Right ventricle myocardium superior (tissue), 1 donor: ENCODE measurements at regions of chr1 and their contacts with region 1.

Region 1: DNA sequence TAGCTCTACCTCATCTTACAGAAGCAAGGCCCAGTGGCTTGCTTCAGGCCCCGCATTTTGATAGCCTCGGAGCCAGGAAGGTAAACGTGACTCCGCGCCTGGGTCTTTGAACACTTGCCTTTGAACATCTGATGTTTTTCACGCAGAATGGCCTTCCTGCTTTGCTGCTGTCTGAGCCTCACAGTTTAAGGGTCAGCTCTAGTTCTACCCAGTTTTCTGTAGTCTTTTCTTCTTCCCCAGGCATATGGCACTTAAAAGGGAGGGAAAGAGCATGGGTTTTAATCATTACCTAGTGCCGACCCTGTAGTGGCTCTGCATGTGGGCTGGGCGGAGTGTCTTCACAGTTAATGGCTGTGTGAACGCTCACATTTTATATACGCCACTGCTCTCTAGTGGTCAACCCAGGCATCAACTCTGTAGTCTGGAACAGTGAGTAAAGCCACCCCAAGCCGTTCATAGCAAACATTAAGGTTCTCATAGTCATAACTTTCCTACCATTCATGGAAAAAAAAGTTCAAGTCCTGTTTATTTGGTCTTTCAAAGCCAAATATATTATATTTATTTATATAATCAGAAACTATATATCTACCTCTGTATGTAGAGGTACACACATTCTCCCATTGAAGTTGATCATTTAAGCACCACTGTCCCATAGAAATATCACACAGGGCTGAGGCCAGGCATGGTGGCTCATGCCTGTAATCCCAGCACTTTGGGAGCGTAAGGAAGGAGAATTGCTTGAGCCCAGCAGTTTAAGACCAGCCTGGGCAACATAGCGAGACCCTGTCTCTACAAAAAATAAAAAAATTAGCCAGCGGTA is 78.1 kb downstream of the IER5 start:
- DNase-seq: no peak
- ATAC-seq: peak; percentile 98

Region 2: GRCh38 chr1:180527101-180527669 is 639.4 kb before region 1 on chr1:
- intact Hi-C with region 1: loop called (anchors 10 kb)
- DNase-seq: no peak
- ATAC-seq: no peak

Region 3: DNA sequence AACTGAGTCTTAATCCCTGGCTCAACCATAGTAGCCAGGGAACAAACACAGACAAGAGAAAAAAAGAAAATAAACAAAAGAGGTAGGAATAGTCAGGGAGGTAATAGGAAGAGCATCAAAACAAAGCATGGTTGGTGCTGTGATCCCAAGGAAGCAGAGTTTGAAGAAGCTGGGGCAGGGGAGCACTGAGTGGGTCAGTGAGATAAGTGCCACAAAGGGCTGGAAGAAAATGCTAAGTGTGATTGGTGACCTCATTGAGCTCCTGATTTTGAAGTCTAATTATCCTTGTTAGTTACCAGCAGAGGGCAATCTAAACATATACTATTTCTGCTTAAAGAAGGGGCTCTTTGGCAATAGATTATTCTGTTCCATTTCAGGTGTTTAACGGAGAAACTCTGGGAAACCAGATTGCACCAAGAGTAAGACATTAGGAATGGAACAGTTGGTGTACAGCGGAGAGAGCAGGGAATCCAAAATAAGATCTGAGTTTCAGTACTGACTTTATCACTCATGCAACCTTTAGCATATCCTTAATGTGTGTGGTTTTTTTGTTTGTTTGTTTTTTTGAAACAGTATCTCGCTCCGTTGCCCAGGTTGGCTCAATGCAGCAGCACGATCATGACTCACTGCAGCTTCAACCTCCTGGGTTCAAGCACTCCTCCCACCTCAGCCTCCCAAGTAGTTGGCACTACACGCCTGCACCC is 284.6 kb before region 1 on chr1:
- intact Hi-C with region 1: loop called (anchors 5 kb)
- DNase-seq: no peak
- ATAC-seq: peak; percentile 59

Region 4: DNA sequence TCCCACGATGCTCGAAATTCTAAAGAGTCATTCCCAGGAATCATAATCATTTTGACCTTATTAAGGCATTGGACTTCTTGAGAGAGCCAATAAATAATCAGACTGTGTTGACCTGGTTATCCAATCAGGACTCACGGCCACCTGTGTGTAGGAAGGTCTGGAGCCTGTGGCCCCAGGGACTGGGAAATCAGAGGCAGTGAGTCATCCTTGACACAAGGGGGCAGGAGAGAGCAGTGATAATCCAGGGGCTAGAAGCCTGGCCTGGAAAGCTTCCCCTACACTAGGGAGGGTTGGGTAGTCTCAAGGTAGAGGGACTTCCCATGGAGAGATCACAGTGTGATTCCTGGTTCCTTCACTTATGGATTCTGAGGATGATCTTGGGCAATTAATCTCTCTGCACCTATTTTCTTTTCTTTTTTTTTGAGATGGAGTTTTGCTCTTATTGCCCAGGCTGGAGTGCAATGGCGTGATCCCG is 128.2 kb before region 1 on chr1:
- intact Hi-C with region 1: loop called (anchors 5 kb)
- DNase-seq: peak; percentile 49
- ATAC-seq: peak; percentile 77